ENCODE measurements at regions of chr1 and their contacts with region 1.

Region 1: GRCh38 chr1:52920791-52921291 is 699 bp downstream of the ECHDC2 start:
- DNase-seq: no peak
- H3K4me3 Mint-ChIP-seq: peak overlapping the region; percentile 78
- H3K27ac Mint-ChIP-seq: no peak overlapping the region
- H3K4me1 Mint-ChIP-seq: peaks cover 27% of the 10 kb centered on the region
- H3K27me3 Mint-ChIP-seq: no peaks in the 10 kb centered on the region

Region 2: DNA sequence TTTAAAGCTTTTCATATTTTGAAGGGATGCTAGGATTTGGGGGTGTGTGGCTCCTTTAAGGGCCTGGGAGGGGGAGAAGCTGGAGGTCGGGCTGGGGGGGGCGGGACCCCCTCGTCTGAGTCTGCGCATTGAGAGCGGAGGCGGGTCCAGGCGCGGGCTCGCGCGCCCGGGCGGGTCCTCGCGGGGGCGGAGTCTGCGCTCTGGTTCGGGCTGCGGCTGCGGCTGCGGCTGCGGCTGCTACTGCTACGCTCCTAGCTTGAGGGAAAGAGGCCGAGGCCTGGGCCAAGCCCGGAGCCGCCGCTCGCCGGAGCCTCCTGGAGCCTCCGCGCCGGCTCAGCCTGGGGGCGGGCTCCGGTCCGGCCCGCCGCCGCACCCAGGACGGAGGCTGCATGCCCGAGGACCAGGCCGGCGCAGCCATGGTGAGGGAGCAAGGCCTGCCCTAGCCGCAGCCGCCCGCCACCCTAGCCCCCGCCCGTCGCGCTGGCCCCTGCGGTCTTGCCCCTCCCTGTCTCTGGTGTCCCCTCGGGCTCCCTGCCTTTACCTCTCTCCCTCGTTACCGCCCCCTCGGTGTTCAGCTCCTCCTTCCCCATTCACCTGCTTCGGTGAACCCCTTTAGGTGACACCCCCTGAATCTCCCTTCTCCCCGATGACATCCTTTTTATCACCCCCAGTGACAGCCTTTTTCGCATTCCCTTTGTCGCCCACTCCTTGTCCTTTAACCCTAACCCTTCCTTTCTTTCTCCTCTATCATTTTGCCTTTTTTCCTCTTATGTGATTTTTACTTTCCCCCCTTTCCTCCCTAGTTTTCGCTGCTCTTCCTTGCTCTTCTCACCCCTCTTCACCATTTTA is 194.4 kb before region 1 on chr1 and contains the start of gene ZYG11B:
- CTCF ChIA-PET with region 1: interaction called, 3 read pairs
- intact Hi-C with region 1: loop called (anchors 2 kb)
- DNase-seq: peak; percentile 91
- H3K4me3 Mint-ChIP-seq: peak within 1 kb of the TSS; percentile 85
- H3K27ac Mint-ChIP-seq: peak within 1 kb of the TSS; percentile 55
- H3K4me1 Mint-ChIP-seq: peaks cover 33% of the 10 kb centered on the region
- H3K27me3 Mint-ChIP-seq: no peaks in the 10 kb centered on the region
- total RNA-seq, gene ZYG11B: 10.7 to 11.6 TPM

Region 3: GRCh38 chr1:52842643-52843309 is 78.1 kb before region 1 on chr1 and contains the start of gene ZYG11A:
- CTCF ChIA-PET with region 1: interaction called, 4 read pairs
- intact Hi-C with region 1: loop called (anchors 1 kb)
- DNase-seq: peak; percentile 81
- H3K4me3 Mint-ChIP-seq: peak within 1 kb of the TSS; percentile 65
- H3K27ac Mint-ChIP-seq: no peak within 1 kb of the TSS
- H3K4me1 Mint-ChIP-seq: peaks cover 1% of the 10 kb centered on the region
- H3K27me3 Mint-ChIP-seq: peaks cover 18% of the 10 kb centered on the region
- total RNA-seq, gene ZYG11A: 0.05 TPM